H1 (cell line): ENCODE measurements at regions of chr19 and their contacts with region 1.

Region 1: GRCh38 chr19:13952154-13953035 is at the start of gene DCAF15:
- DNase-seq: peak; percentile 99 to 100
- H3K4me3 ChIP-seq: peak within 1 kb of the TSS; percentile 82 to 100 (median 91)
- H3K27ac ChIP-seq: peak within 1 kb of the TSS; percentile 94
- H3K4me1 ChIP-seq: peaks cover 0 to 7% (median 3%) of the 10 kb centered on the region in 4 experiments; a peak in 6 of 7 replicates
- H3K27me3 ChIP-seq: no peaks in the 10 kb centered on the region
- CTCF ChIP-seq: no peak
- EP300 ChIP-seq: peak in 1 of 2 experiments; percentile 4; a peak in 1 of 3 replicates
- POLR2A ChIP-seq: peak; percentile 72 to 84
- RAD21 ChIP-seq: no peak
- total RNA-seq, gene DCAF15: 68.7 and 77.1 TPM in 2 replicates

Region 2: DNA sequence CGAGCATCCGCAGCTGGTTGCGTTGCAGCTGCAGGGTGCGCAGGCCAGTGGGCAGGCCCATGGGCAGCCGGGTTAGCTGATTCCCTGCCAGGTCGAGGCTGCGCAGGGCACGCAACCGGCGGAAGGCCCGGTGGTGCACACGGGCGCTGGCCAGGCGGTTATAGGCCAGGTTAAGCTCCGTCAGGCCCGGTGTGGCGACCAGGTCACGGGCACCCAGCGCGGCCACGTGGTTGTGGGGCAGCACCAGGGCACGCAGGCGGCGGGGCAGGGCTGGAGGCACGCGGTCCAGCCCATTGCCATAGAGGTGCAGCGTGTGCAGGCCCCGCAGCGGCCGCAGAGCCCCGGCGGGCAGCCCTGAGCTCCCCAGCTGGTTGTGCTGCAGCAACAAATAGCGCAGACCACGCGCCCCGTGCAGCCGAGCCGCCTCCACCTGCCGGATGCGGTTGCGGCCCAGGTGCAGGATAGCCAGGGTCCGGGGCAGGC is 19.4 kb before region 1 on chr19:
- CTCF ChIA-PET with region 1: interaction called, 12 read pairs
- POLR2A ChIA-PET with region 1: interaction called, 39 read pairs
- DNase-seq: no peak
- H3K4me3 ChIP-seq: no peak overlapping the region
- H3K27ac ChIP-seq: no peak overlapping the region
- H3K4me1 ChIP-seq: peaks cover 3 to 35% (median 15%) of the 10 kb centered on the region in 4 experiments
- H3K27me3 ChIP-seq: peaks cover 0 to 2% (median 0%) of the 10 kb centered on the region in 4 experiments; a peak in 1 of 7 replicates
- CTCF ChIP-seq: no peak
- EP300 ChIP-seq: no peak
- POLR2A ChIP-seq: no peak
- RAD21 ChIP-seq: no peak

Region 3: DNA sequence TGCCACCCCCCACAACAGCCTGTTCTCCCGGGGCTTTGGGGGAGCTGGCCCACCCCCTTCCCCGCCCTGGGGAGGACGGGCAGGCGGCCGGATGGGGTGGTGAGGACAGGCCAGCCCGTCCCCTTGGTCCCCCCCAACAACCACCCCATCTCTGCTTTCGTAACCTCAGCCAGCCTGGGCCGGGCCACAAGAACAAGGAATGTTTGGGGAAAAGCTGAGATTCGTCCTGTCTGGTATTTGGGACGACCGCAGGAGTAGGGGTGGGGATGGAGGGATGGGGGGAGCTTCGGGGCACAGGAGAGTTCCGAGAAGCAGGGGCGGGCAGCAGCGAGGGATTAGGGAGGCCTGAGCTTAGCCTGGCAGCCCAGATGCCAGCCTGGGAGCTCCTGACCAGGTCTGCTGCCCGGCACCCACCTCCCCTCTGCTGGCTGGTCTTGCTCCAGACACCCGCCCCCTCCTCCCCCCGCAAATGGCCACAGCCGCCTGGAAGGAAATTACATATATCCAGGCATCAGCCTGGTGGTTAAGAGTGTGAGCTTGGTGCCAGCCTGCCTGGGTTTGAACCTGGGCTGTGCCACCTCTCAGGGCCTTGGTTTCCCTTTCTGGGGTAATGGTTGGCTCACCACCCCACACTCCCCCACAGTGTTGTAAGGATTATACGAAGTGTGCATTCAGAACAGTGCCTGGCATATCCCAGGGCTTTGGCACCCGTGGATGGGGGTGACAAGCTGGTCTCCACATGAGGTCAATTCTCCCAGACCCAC is 13.9 kb before region 1 on chr19 and contains the start of gene PODNL1:
- CTCF ChIA-PET with region 1: interaction called, 12 read pairs
- POLR2A ChIA-PET with region 1: interaction called, 39 read pairs
- DNase-seq: no peak
- H3K4me3 ChIP-seq: peak within 1 kb of the TSS in 1 of 4 experiments; percentile 34; a peak in 1 of 8 replicates
- H3K27ac ChIP-seq: no peak within 1 kb of the TSS
- H3K4me1 ChIP-seq: peaks cover 3 to 34% (median 19%) of the 10 kb centered on the region in 4 experiments
- H3K27me3 ChIP-seq: peaks cover 0 to 2% (median 0%) of the 10 kb centered on the region in 4 experiments; a peak in 1 of 7 replicates
- CTCF ChIP-seq: no peak
- EP300 ChIP-seq: no peak
- POLR2A ChIP-seq: no peak
- RAD21 ChIP-seq: no peak
- total RNA-seq, gene PODNL1: 0.75 and 1.5 TPM in 2 replicates

Region 4: GRCh38 chr19:13969897-13970296 is 17.5 kb after region 1 on chr19:
- CTCF ChIA-PET with region 1: interaction called, 77 read pairs
- POLR2A ChIA-PET with region 1: interaction called, 14 read pairs
- DNase-seq: no peak
- H3K4me3 ChIP-seq: no peak overlapping the region
- H3K27ac ChIP-seq: no peak overlapping the region
- H3K4me1 ChIP-seq: 0 out of 7 replicates have a peak, but pooled peaks cover 0 to 3% (median 0%) of the 10 kb centered on the region in 4 experiments
- H3K27me3 ChIP-seq: no peaks in the 10 kb centered on the region
- CTCF ChIP-seq: no peak
- EP300 ChIP-seq: no peak
- POLR2A ChIP-seq: no peak
- RAD21 ChIP-seq: no peak

Region 5: GRCh38 chr19:13978347-13978733 is 25.9 kb after region 1 on chr19:
- CTCF ChIA-PET with region 1: interaction called, 77 read pairs
- POLR2A ChIA-PET with region 1: interaction called, 14 read pairs
- DNase-seq: peak; percentile 94 to 98
- H3K4me3 ChIP-seq: peak overlapping the region; percentile 42 to 70 (median 44)
- H3K27ac ChIP-seq: peak overlapping the region; percentile 56; the same call in 1 of the 2 replicates
- H3K4me1 ChIP-seq: peaks cover 0 to 15% (median 8%) of the 10 kb centered on the region in 4 experiments; a peak in 4 of 7 replicates
- H3K27me3 ChIP-seq: no peaks in the 10 kb centered on the region
- CTCF ChIP-seq: 0 out of 4 replicates have a peak, but pooled peaks of 1 of the 3 experiments have one; percentile 3
- EP300 ChIP-seq: no peak
- POLR2A ChIP-seq: no peak; a peak in 1 of 3 replicates
- RAD21 ChIP-seq: no peak

Region 6: GRCh38 chr19:13986348-13986904 is 34.0 kb after region 1 on chr19:
- CTCF ChIA-PET with region 1: no interaction called
- POLR2A ChIA-PET with region 1: interaction called, 10 read pairs
- DNase-seq: peak; percentile 68 to 85
- H3K4me3 ChIP-seq: peak overlapping the region in 3 of 4 experiments; percentile 7 to 46 (median 26); a peak in 4 of 8 replicates
- H3K27ac ChIP-seq: peak overlapping the region; percentile 83; the same call in 1 of the 2 replicates
- H3K4me1 ChIP-seq: peaks cover 0 to 42% (median 36%) of the 10 kb centered on the region in 4 experiments; a peak in 6 of 7 replicates
- H3K27me3 ChIP-seq: no peaks in the 10 kb centered on the region
- CTCF ChIP-seq: no peak
- EP300 ChIP-seq: no peak
- POLR2A ChIP-seq: peak in 1 of 2 experiments; percentile 51; a peak in 1 of 3 replicates
- RAD21 ChIP-seq: no peak

Region 7: GRCh38 chr19:14048443-14049153 is 96.2 kb after region 1 on chr19:
- CTCF ChIA-PET with region 1: interaction called, 11 read pairs
- POLR2A ChIA-PET with region 1: interaction called, 5 read pairs
- DNase-seq: peak; percentile 56 to 97
- H3K4me3 ChIP-seq: no peak overlapping the region
- H3K27ac ChIP-seq: no peak overlapping the region
- H3K4me1 ChIP-seq: no peaks in the 10 kb centered on the region; a peak in 1 of 7 replicates
- H3K27me3 ChIP-seq: no peaks in the 10 kb centered on the region
- CTCF ChIP-seq: peak; percentile 95 to 97 (median 96)
- EP300 ChIP-seq: no peak
- POLR2A ChIP-seq: no peak
- RAD21 ChIP-seq: peak; percentile 66 to 75

Region 8: DNA sequence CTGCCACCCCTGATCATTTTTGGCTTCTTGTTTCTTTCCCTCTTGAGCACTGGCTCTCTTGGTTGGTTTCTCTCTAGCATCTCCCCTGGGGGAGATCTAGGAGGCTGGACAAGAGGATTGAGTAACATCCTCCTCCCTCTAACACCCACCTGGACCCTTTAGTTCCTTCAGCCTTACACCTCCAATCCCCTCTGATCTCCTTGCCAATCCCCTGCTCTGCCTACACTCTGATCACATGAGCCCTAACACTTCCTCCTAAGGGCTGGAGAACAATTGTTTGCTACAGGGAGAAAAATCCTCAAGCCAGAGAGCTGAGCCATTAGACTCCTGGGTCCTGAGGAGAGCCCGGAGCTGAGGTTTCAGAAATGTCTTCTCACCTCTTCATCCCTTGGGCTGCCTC is 319.4 kb after region 1 on chr19:
- CTCF ChIA-PET with region 1: no interaction called
- POLR2A ChIA-PET with region 1: no interaction called
- DNase-seq: no peak
- H3K4me3 ChIP-seq: no peak overlapping the region
- H3K27ac ChIP-seq: no peak overlapping the region
- H3K4me1 ChIP-seq: peaks cover 0 to 3% (median 0%) of the 10 kb centered on the region in 4 experiments; a peak in 1 of 7 replicates
- H3K27me3 ChIP-seq: no peaks in the 10 kb centered on the region; a peak in 2 of 7 replicates
- CTCF ChIP-seq: no peak
- EP300 ChIP-seq: no peak
- POLR2A ChIP-seq: no peak
- RAD21 ChIP-seq: no peak